ENCODE measurements at regions of chr1 and their contacts with region 1.

Region 1: DNA sequence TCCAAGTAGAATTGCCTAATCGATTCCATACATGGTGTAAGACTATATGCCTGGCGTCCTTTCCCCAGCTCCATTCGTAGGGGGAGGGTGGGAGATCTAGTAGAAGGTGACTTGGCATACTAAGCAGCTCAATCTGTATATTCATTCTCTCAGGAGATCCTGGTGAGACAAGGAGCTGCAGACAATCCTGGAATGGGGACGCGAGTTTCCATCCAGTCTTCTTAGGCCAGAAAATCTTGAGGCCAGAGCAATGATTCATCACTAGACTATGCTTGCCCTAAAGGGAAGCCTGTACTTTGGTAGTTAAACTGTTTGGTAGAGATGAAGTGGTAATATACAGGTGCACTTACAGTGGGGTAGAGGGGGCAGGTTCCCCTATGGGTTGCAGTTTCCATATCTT is 468.7 kb downstream of the ADGRL2 start:
- DNase-seq: no peak
- H3K4me3 ChIP-seq: no peak overlapping the region
- H3K27ac ChIP-seq: no peak overlapping the region
- H3K4me1 ChIP-seq: no peaks in the 10 kb centered on the region
- H3K27me3 ChIP-seq: no peaks in the 10 kb centered on the region
- CTCF ChIP-seq: no peak

Region 2: DNA sequence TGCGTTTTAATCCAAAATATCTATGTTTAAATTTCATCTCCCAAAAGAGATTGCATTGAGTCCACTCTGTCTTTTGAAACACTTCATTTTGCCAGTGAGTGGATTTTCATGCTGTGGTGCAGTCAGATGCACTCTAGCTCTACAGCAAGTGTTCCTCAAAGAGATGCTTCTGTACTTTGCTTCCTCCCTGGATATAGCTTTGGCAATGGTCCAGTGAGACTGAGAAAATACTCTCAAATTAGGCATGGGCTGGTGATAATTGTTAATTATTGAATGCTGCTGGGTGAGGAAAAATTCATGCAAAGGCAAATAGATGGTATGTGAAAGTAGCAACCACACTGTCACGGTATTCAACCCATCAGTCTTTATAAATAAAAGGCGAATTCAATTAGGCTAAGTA is 71.8 kb before region 1 on chr1:
- intact Hi-C with region 1: loop called (anchors 10 kb)
- DNase-seq: no peak
- H3K4me3 ChIP-seq: no peak overlapping the region
- H3K27ac ChIP-seq: no peak overlapping the region
- H3K4me1 ChIP-seq: no peaks in the 10 kb centered on the region
- H3K27me3 ChIP-seq: no peaks in the 10 kb centered on the region
- CTCF ChIP-seq: no peak

Region 3: DNA sequence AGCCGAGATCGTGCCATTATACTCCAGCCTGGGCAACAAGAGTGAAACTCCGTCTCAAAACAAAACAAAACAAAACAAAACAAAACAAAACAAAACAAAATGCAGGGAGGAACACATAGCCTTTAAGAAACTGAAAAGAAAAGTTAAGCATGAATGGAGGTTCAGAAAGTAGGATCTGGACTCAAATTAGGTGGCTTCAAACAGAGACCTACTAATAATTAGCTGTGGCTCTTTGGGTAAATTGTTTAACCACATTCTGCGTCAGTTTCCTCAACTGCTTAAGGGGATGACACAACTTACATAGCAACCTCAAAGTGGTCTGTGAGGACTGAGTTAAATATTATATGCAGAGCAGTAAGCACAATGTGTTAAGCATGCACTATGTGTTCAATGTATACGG is 10.5 kb before region 1 on chr1:
- intact Hi-C with region 1: no loop called
- DNase-seq: no peak
- H3K4me3 ChIP-seq: no peak overlapping the region
- H3K27ac ChIP-seq: no peak overlapping the region
- H3K4me1 ChIP-seq: no peaks in the 10 kb centered on the region
- H3K27me3 ChIP-seq: no peaks in the 10 kb centered on the region
- CTCF ChIP-seq: no peak

Region 4: DNA sequence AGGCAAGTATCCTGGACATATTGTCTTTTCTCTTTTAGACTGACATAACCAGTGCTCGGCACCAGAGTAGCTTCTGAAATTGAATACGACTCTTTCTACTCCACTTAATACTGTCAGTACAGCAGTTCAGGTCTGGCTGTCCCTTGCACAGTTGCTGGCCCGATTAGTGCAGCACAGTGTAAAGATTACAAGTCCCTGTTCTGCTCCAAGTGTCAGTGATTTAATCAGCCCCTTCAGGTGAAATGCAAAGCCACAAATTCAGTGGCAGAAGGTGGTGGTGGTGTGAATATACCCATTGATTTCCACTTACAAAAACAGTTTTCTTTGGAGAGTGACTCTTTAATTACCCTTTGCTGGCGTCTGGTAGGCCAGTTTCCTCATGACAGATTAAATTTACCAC is 76.7 kb after region 1 on chr1:
- intact Hi-C with region 1: no loop called
- DNase-seq: no peak
- H3K4me3 ChIP-seq: no peak overlapping the region
- H3K27ac ChIP-seq: no peak overlapping the region
- H3K4me1 ChIP-seq: no peaks in the 10 kb centered on the region
- H3K27me3 ChIP-seq: no peaks in the 10 kb centered on the region
- CTCF ChIP-seq: no peak

Measured in left ventricle myocardium inferior (tissue), 1 donor.